B cell (primary cell): ENCODE measurements at regions of chr15 and their contacts with region 1.

Region 1: GRCh38 chr15:79970624-79971434 is at the start of gene BCL2A1:
- DNase-seq: peak; percentile 92
- ATAC-seq: peak; percentile 85
- H3K4me3 ChIP-seq: peak within 1 kb of the TSS; percentile 33 to 88 (median 57)
- H3K4me3 Mint-ChIP-seq: peak within 1 kb of the TSS; percentile 91
- H3K27ac ChIP-seq: peak within 1 kb of the TSS; percentile 75 to 79
- H3K27ac Mint-ChIP-seq: peak within 1 kb of the TSS; percentile 90
- H3K4me1 ChIP-seq: peaks cover 53 to 64% of the 10 kb centered on the region in 2 donors
- H3K4me1 Mint-ChIP-seq: peaks cover 60% of the 10 kb centered on the region
- H3K27me3 ChIP-seq: no peaks in the 10 kb centered on the region
- H3K27me3 Mint-ChIP-seq: no peaks in the 10 kb centered on the region
- CTCF ChIP-seq: no peak
- total RNA-seq, gene BCL2A1: 32.9 and 33.8 TPM in 2 replicates

Region 2: GRCh38 chr15:79896637-79897379 is 74.0 kb before region 1 on chr15 and contains the start of gene MTHFS:
- CTCF ChIA-PET with region 1: interaction called, 10 read pairs
- POLR2A ChIA-PET with region 1: no interaction called
- intact Hi-C with region 1: loop called (anchors 2 kb)
- DNase-seq: peak; percentile 93
- ATAC-seq: peak; percentile 92
- H3K4me3 ChIP-seq: peak within 1 kb of the TSS; percentile 71 to 85 (median 79)
- H3K4me3 Mint-ChIP-seq: peak within 1 kb of the TSS; percentile 97
- H3K27ac ChIP-seq: peak within 1 kb of the TSS; percentile 90 to 98
- H3K27ac Mint-ChIP-seq: peak within 1 kb of the TSS; percentile 98
- H3K4me1 ChIP-seq: peaks cover 23 to 32% of the 10 kb centered on the region in 2 donors
- H3K4me1 Mint-ChIP-seq: peaks cover 40% of the 10 kb centered on the region
- H3K27me3 ChIP-seq: no peaks in the 10 kb centered on the region
- H3K27me3 Mint-ChIP-seq: no peaks in the 10 kb centered on the region
- CTCF ChIP-seq: peak; percentile 68
- total RNA-seq, gene MTHFS: 20.1 and 24.4 TPM in 2 replicates